ENCODE measurements at regions of chr6 and their contacts with region 1.

Region 1: DNA sequence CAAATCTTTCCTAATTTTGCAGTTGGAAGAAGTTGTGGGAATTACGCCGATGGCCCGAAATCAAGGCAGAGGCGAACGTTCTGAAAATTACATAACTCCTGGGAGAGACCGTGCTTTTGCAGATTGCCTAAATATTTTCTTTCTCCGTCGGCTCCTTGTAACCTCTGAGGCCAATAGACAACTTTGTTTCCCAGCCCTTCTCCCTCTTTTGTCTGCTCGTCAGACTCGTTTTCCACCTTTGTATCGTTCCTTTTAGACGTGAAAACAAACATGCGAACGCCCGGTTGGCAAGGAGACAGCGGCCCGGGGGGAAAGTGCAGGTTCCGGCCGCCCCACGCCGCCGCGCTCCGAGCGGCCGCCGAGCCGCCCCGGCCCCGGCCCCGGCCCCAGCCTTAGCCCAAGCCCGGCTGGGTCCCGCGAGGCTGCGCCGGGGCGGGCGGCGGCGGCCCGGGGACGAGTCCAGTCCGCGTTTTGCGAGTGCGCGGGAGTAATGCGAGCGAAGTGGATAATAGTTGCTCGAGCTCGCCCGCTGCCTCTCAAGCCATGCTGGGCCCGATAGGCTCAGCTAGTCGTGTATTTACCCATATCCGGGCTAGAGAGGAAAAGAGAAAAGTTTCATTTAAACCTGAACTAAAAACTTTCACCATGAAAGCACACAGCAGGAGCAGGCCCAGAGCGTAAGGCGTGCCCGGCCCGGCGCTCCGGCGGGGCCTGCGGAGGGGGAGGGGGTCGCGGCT is at the start of gene ARID1B:
- DNase-seq: peak; percentile 79
- H3K4me3 Mint-ChIP-seq: peak within 1 kb of the TSS; percentile 83
- H3K27ac Mint-ChIP-seq: peak within 1 kb of the TSS; percentile 95
- H3K4me1 Mint-ChIP-seq: peaks cover 20% of the 10 kb centered on the region
- H3K27me3 Mint-ChIP-seq: no peaks in the 10 kb centered on the region
- total RNA-seq, gene ARID1B: 39.0 to 41.5 TPM

Region 2: GRCh38 chr6:156396068-156396771 is 380.8 kb before region 1 on chr6:
- CTCF ChIA-PET with region 1: no interaction called
- POLR2A ChIA-PET with region 1: no interaction called
- intact Hi-C with region 1: loop called (anchors 5 kb)
- DNase-seq: peak; percentile 32
- H3K4me3 Mint-ChIP-seq: peak overlapping the region; percentile 69
- H3K27ac Mint-ChIP-seq: peak overlapping the region; percentile 72
- H3K4me1 Mint-ChIP-seq: peaks cover 71% of the 10 kb centered on the region
- H3K27me3 Mint-ChIP-seq: peaks cover 6% of the 10 kb centered on the region

Region 3: DNA sequence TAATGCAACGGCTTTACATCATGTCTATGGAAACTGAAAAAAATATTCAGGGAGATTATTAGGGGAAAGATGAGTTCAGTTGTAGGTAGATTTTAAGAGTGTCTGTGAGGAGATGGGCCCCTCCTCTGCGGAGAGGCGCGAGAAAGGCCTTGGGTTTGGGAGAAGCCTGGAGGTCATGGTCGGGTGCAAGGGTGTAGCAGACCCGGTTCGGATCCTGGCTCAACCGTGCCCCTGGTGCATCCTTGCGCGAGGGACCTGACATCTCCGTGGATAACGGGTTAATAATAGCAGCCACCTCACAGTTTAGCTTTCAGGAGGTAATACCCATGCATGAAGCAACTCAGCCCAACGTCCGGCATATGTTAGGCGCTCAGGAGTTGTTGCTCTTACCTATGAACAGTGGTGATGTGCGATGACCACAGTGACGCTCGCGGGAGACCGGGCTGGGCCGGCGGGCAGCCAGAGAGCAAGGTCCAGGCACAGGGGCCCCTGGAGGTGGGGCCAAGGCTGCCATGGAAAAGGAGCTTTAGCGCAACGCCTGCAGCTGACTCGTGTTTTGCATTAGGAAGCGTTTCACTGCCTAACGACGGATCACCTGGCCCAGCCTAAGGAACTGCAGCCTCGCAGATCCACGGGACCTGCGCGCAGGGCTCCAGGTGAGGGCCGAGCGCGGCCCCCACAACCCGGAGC is 146.2 kb before region 1 on chr6:
- CTCF ChIA-PET with region 1: no interaction called
- POLR2A ChIA-PET with region 1: no interaction called
- intact Hi-C with region 1: no loop called
- DNase-seq: no peak
- H3K4me3 Mint-ChIP-seq: no peak overlapping the region
- H3K27ac Mint-ChIP-seq: no peak overlapping the region
- H3K4me1 Mint-ChIP-seq: peaks cover 22% of the 10 kb centered on the region
- H3K27me3 Mint-ChIP-seq: no peaks in the 10 kb centered on the region

Region 4: DNA sequence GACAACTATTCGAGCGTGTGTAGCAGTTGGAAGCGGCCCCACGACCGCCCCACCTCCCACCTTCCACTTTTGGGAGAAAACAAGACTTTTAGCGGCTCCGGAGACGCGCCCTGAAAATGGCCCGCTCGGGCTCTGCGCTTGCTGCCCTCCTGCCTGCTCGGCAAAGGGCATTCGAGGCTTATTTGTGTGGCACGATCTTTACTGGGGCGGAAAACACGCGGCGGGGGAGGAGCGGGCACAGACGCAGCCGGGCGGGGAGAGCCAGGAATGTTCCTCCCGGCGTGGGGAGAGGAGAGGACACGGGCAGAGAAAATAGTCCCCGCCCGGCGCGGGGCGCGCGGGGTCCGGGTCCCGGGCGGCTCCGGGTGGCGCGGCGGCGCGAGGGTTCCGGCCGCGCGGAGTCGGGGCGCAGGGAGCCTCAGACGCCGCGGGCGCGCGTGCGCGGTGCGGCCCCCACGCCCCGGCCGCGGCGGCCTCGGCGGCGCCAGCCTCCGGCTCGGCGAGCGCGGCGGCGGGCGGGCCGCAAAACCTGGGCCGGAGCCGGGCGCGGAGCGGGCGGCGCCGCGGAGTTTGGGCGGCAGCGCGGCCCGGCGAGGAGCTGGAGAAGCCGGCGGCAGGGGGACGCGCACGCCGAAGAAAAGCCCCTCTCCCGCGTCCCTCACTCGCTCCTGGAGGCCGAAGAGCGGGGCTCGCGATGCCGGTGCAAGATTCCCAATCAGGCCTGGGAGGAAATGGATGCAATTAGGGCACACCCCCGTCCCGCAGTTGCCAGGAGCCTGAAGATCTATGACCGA is 89.8 kb before region 1 on chr6:
- CTCF ChIA-PET with region 1: no interaction called
- POLR2A ChIA-PET with region 1: interaction called, 8 read pairs
- intact Hi-C with region 1: loop called (anchors 1 kb)
- DNase-seq: peak; percentile 77
- H3K4me3 Mint-ChIP-seq: peak overlapping the region; percentile 77
- H3K27ac Mint-ChIP-seq: peak overlapping the region; percentile 73
- H3K4me1 Mint-ChIP-seq: peaks cover 24% of the 10 kb centered on the region
- H3K27me3 Mint-ChIP-seq: no peaks in the 10 kb centered on the region

Region 5: DNA sequence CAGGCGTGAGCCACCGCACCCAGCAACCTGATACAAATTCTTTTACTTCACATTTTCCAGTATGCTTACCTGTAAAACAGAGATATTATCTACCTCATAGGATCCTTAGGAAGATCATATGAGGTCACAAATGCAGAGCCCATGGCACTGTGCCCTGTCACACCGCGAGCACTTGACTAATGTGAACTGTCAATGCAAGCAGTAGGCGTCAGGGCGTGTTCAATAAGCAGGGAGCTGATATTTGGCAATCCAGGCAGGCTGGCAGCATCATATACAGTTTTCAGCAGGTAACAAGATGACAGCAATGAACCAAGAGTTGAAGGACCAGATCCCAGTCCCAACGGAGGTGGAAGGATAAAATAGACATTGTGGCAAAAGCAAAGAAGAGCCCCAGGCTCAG is 14.5 kb before region 1 on chr6:
- CTCF ChIA-PET with region 1: no interaction called
- POLR2A ChIA-PET with region 1: no interaction called
- intact Hi-C with region 1: no loop called
- DNase-seq: no peak
- H3K4me3 Mint-ChIP-seq: no peak overlapping the region
- H3K27ac Mint-ChIP-seq: no peak overlapping the region
- H3K4me1 Mint-ChIP-seq: peaks cover 2% of the 10 kb centered on the region
- H3K27me3 Mint-ChIP-seq: peaks cover 2% of the 10 kb centered on the region

Region 6: GRCh38 chr6:156857573-156857972 is 80.6 kb after region 1 on chr6:
- CTCF ChIA-PET with region 1: interaction called, 3 read pairs
- POLR2A ChIA-PET with region 1: no interaction called
- intact Hi-C with region 1: loop called (anchors 1 kb)
- DNase-seq: peak; percentile 51
- H3K4me3 Mint-ChIP-seq: no peak overlapping the region
- H3K27ac Mint-ChIP-seq: peak overlapping the region; percentile 90
- H3K4me1 Mint-ChIP-seq: peaks cover 78% of the 10 kb centered on the region
- H3K27me3 Mint-ChIP-seq: no peaks in the 10 kb centered on the region

Region 7: DNA sequence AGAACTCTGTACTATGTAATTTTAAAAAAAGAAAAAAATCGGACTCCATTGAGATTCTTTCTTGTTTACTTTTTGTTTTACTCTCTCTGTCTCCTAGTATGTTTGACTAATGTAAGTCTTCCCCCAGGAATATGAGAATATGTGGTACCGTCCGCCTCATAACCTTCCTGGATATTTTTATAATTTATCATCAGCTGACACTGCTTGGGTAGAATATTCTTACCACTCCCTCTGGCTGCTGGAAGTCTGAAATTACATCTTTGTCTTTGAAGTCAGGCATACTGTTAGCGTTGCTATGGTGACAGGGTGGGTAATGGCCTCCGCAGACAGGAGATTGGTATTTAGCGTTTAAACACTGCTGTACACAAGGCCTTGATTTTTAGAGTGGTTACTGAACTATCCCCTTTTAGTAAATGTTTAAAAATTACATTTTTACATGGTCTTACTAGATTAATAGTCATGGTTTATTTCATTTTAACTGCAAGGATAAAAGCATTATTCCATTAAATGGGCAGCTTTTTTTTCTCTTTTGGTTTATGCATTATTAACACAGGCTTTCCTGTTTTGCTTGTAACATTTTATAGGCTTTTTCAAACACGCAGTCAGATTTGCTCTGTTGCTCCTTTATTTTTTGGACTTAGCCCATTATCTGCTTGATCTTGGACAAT is 176.6 kb after region 1 on chr6:
- CTCF ChIA-PET with region 1: interaction called, 3 read pairs
- POLR2A ChIA-PET with region 1: no interaction called
- intact Hi-C with region 1: loop called (anchors 2 kb)
- DNase-seq: peak; percentile 41
- H3K4me3 Mint-ChIP-seq: no peak overlapping the region
- H3K27ac Mint-ChIP-seq: no peak overlapping the region
- H3K4me1 Mint-ChIP-seq: peaks cover 62% of the 10 kb centered on the region
- H3K27me3 Mint-ChIP-seq: no peaks in the 10 kb centered on the region

Region 8: DNA sequence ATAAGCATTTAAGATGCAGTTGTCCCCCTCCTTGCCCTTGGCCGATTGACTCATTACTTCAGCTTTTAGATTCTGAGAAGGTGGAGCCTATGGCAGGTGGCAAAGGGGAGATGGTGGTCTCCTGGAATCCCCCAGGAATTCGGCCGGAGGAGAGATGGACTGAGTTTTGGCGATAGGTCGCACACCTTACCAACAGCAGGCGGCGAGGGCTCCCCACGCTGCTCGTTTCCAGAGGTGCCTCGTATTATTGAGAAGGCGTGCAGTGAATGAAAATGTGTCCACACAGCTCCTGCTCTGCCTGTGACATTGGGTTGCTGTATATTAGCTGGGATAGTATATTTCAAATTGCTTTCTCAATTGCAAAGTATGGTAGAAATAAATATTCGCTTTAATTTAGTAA is 224.7 kb after region 1 on chr6:
- CTCF ChIA-PET with region 1: no interaction called
- POLR2A ChIA-PET with region 1: no interaction called
- intact Hi-C with region 1: no loop called
- DNase-seq: no peak
- H3K4me3 Mint-ChIP-seq: no peak overlapping the region
- H3K27ac Mint-ChIP-seq: no peak overlapping the region
- H3K4me1 Mint-ChIP-seq: peaks cover 21% of the 10 kb centered on the region
- H3K27me3 Mint-ChIP-seq: no peaks in the 10 kb centered on the region

Region 9: GRCh38 chr6:157099912-157100593 is 323.0 kb after region 1 on chr6:
- CTCF ChIA-PET with region 1: no interaction called
- POLR2A ChIA-PET with region 1: no interaction called
- intact Hi-C with region 1: loop called (anchors 2 kb)
- DNase-seq: peak; percentile 74
- H3K4me3 Mint-ChIP-seq: peak overlapping the region; percentile 20
- H3K27ac Mint-ChIP-seq: peak overlapping the region; percentile 69
- H3K4me1 Mint-ChIP-seq: peaks cover 60% of the 10 kb centered on the region
- H3K27me3 Mint-ChIP-seq: no peaks in the 10 kb centered on the region

Region 10: GRCh38 chr6:157379656-157380454 is 602.8 kb after region 1 on chr6:
- CTCF ChIA-PET with region 1: no interaction called
- POLR2A ChIA-PET with region 1: no interaction called
- intact Hi-C with region 1: loop called (anchors 2 kb)
- DNase-seq: peak; percentile 93
- H3K4me3 Mint-ChIP-seq: peak overlapping the region; percentile 78
- H3K27ac Mint-ChIP-seq: peak overlapping the region; percentile 71
- H3K4me1 Mint-ChIP-seq: peaks cover 31% of the 10 kb centered on the region
- H3K27me3 Mint-ChIP-seq: peaks cover 9% of the 10 kb centered on the region

Region 11: DNA sequence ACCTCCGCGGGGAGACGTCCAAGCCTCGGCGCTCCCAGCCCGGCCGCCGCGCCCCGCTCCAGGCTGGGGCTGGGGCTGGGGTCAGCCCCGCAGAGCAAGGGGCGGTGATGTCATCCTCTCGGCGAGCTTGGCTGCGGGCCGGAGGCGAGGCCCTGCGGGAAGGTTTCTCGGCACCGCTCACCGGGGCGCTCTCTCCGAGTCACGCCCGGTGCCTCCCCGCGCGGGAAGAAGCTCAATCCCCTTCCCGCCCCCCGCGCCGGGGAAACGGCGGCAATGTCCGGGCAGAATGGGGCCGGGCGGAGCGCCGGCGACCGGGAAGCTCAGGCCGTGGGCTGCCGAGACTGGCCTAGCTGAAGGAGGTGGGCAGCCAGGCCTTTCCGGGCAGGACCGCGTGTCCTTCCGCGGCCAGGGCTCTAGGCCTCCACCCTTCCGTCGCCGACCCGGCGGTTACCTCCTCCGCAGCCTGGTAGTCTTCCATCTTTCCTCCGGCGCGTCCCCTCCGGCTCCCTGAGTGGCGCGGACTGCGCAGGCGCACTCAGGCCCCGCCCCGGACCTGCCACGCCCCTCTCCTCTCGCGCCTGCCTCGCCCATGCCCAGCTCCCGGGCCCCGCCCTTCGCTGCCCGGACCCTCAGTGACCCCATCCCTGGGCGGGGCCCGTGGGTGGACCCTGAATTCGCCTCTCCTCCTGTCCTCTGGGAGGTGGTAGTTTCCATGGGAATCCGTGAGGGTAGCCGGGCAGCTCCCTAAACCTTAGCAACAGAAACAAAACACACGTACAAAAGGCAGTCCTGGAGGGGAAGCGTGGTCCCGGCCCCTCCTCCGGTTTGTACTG is 1867.4 kb after region 1 on chr6 and contains the start of gene DYNLT1:
- CTCF ChIA-PET with region 1: no interaction called
- POLR2A ChIA-PET with region 1: no interaction called
- intact Hi-C with region 1: no loop called
- DNase-seq: peak; percentile 95
- H3K4me3 Mint-ChIP-seq: peak within 1 kb of the TSS; percentile 97
- H3K27ac Mint-ChIP-seq: peak within 1 kb of the TSS; percentile 100
- H3K4me1 Mint-ChIP-seq: peaks cover 80% of the 10 kb centered on the region
- H3K27me3 Mint-ChIP-seq: no peaks in the 10 kb centered on the region
- total RNA-seq, gene DYNLT1: 117 to 120 TPM